ENCODE measurements at regions of chr20 and their contacts with region 1.

Region 1: DNA sequence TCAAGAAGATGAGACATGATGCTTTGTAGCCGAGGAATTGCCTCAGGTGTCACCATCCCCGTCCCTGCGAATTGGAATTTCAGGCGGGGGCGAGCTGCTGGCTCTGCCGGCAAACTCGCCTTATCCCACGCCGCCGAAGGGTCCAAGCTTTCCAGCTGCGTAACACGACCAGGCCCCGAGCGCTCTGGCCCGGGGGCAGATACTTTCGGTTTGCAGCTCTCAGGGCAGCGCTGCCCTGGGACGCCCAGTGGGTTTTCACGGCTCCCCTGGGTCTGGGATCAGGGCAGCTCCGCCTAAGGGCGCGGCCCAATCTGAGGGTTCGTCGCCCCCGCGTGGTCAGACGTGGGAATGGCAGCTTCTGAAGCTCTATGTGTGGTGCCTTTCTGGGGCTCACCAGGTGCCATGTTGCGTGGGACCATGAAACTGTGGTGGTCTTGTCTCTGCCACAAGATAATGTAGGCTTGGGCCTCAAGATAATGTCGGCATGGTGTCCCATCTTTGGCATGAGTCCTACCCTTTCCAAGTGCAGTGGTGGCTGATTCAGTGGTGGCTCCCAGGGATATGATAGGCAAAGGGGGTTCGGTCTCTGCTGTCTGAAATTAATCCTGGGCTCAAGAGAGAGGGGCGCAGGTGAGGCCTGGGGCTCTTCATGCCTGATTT is 20.9 kb downstream of the PIGT start:
- DNase-seq: peak; percentile 89 to 91
- H3K4me3 ChIP-seq: peak overlapping the region; percentile 49 to 50
- H3K27ac ChIP-seq: peak overlapping the region; percentile 84 to 86
- H3K4me1 ChIP-seq: no peaks in the 10 kb centered on the region
- H3K27me3 ChIP-seq: no peaks in the 10 kb centered on the region
- CTCF ChIP-seq: peak; percentile 96 to 98 (median 97)
- POLR2A ChIP-seq: peak; percentile 10 to 39

Region 2: DNA sequence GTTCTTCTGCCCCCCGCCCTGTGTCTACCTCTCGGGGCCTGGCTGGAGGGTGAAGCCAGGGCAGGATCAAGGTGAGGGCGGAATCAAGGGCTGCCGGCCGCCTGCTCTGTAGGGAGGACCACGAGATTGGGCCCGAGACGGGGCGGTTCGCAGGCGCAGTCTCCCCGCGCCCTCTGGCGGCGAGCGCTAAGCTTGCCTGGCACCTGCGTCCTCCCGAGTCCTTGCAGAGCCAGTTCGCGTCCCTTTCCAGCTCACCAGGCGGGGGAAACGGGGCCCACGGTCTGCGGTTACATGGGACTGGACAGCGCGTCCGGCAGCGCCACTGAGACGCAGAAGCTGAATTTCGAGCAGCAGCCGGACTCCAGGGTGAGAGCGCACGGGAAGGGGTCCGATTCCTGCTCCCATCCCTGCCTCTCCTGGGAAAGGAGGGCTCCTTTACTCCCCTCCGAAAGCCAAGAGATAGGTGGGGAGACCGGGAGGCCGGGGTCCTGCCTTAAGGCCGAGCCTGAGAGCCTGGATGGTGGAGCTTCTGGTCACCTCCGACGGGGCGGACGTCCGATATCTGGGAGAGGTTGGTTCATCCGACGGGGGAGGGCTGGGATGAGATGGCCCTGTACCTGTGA is 125.2 kb before region 1 on chr20:
- intact Hi-C with region 1: loop called (anchors 2 kb)
- DNase-seq: peak; percentile 28 to 31
- H3K4me3 ChIP-seq: no peak overlapping the region
- H3K27ac ChIP-seq: no peak overlapping the region
- H3K4me1 ChIP-seq: peaks cover 0 to under 1% of the 10 kb centered on the region in 2 donors
- H3K27me3 ChIP-seq: peaks cover 0 to 11% of the 10 kb centered on the region in 2 donors
- CTCF ChIP-seq: peak; percentile 54 to 64 (median 59)
- POLR2A ChIP-seq: no peak

Region 3: GRCh38 chr20:45362804-45363610 is 73.9 kb before region 1 on chr20 and contains the start of gene SYS1:
- intact Hi-C with region 1: loop called (anchors 2 kb)
- DNase-seq: peak; percentile 99
- H3K4me3 ChIP-seq: peak within 1 kb of the TSS; percentile 80 to 85
- H3K27ac ChIP-seq: peak within 1 kb of the TSS; percentile 94 to 95
- H3K4me1 ChIP-seq: peaks cover 5% of the 10 kb centered on the region in 2 donors
- H3K27me3 ChIP-seq: no peaks in the 10 kb centered on the region
- CTCF ChIP-seq: peak; percentile 91 to 97 (median 96)
- POLR2A ChIP-seq: peak; percentile 68 to 93
- total RNA-seq, gene SYS1: 19.0 to 35.6 (median 25.0) TPM

Measured in uterus (tissue), 4 donors.